Dorsolateral prefrontal cortex (tissue), 120 donors: ENCODE measurements at regions of chr10 and their contacts with region 1.

Region 1: GRCh38 chr10:13776861-13777311 is 190.1 kb downstream of the PRPF18 start:
- DNase-seq: no peak
- H3K4me3 ChIP-seq: no peak overlapping the region
- H3K27ac ChIP-seq: peak overlapping the region in 2 of 59 donors; percentile 36 to 39
- H3K27me3 ChIP-seq: no peaks in the 10 kb centered on the region
- CTCF ChIP-seq: no peak

Region 2: DNA sequence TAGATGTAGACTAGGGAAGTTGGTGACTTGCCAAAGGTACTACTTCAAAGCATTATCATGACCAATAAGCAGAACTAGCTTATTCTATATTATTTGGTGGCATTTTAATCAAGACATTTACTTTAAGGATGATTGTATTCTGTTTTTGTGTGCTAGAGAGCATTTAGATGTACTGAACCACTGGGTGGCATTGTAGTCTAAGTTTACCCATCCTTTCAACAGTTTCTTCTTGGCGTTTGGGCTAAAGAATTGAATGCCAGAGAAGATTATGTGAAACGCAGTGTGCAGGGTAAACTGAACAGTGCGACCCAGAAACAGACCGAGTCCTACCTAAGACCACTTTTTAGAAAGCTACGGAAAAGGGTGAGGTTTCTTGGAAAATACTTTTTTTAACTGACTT is 163.4 kb before region 1 on chr10:
- intact Hi-C with region 1: loop called in 1 of 2 experiments (anchors 2 kb)
- DNase-seq: no peak
- H3K4me3 ChIP-seq: peak overlapping the region in 2 of 59 donors; percentile 2 to 14
- H3K27ac ChIP-seq: no peak overlapping the region
- H3K27me3 ChIP-seq: no peaks in the 10 kb centered on the region
- CTCF ChIP-seq: peak in 55 of 56 donors; percentile 4 to 71 (median 54)

Region 3: GRCh38 chr10:13659897-13660550 is 116.9 kb before region 1 on chr10:
- intact Hi-C with region 1: loop called (anchors 1 kb)
- DNase-seq: peak; percentile 63 to 82 (median 78)
- H3K4me3 ChIP-seq: peak overlapping the region in 2 of 59 donors; percentile 1 to 11
- H3K27ac ChIP-seq: peak overlapping the region in 56 of 59 donors; percentile 23 to 91 (median 78)
- H3K27me3 ChIP-seq: no peaks in the 10 kb centered on the region
- CTCF ChIP-seq: peak; percentile 78 to 96 (median 94)